ENCODE measurements at regions of chr3 and their contacts with region 1.

Region 1: DNA sequence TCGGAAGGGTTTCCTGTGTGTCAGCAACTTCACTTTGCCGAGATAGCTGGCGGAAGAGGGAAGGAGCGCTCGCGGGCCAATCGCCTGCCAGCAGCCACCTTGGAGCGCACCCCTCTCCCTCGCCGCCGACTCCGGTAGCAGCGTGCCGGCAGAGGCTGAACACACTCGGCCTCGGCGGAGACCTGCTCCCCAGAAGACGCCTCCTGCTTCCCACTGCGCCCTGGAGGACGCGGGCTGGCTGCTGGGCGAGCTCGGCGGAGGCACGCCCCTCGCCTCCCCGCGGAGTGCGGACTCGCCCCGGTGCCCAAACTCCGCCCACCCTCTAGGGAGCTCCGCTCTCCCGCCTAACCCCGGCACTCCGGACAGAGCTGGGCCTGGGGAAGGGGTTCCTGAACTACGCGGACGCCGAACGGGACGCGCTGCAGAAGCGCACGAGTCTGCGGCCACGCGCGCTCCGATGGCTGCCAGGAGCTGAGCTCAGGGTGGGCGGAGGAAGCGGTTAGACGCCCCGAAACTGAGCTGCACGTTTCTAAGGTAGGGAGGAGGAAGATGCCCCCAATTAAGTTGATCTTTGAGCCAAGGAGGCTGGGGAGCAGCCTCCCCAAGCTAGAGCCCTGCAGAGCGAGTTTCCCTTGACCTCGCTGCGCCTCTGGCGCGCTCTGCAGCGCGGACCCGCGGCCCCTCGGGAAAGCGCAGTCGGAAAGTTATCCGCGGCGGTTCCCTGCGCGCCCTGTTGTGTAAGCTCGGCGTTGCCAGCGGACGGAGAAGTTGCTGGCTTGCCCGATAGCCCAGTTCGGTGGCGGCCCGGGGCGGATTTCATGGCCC is at the start of gene P2RY1:
- DNase-seq: peak; percentile 68 to 86 (median 72)
- ATAC-seq: peak; percentile 81 to 94 (median 90)
- H3K4me3 ChIP-seq: peak within 1 kb of the TSS; percentile 53 to 88 (median 80)
- H3K27ac ChIP-seq: peak within 1 kb of the TSS; percentile 14 to 88 (median 74)
- H3K4me1 ChIP-seq: peaks cover 0 to 40% (median 6%) of the 10 kb centered on the region in 12 donors
- H3K27me3 ChIP-seq: peaks cover 0 to 5% (median 0%) of the 10 kb centered on the region in 9 donors
- CTCF ChIP-seq: peak in 9 of 12 donors; percentile 13 to 54 (median 29)
- POLR2A ChIP-seq: peak in 1 of 2 donors; percentile 52
- total RNA-seq, gene P2RY1: 4.1 to 8.4 (median 6.3) TPM

Region 2: DNA sequence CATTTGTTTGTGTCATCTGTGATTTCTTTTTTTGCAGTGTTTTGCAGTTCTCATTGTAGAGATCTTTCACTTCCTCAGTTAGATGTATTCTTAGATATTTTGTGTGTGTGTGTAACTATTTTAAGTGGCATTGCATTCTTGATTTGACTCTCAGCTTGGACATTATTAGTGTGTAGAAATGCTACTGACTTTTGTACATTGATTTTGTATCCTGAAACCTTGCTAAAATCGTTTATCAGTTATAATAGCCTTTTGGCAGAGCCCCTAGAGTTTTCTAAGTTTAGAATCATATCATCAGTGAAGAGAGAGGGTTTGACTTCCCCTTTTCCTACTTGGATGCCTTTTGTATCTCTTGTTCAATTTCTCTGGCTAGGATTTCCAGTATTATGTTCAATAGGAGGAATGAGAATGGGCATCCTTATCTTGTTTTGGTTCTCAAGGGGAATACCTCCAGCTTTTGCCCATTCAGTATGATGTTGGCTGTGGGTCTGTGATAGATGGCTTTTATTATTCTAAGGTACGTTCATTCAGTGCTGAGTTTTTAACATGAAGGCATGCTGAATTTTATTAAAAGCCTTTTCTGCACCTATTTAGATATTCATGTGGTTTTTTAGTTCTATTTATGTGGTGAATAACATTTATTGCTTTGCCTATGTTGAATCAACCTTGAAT is 354.6 kb before region 1 on chr3:
- intact Hi-C with region 1: loop called in 1 of 10 experiments (anchors 10 kb)
- DNase-seq: no peak
- ATAC-seq: no peak
- H3K4me3 ChIP-seq: no peak overlapping the region
- H3K27ac ChIP-seq: no peak overlapping the region
- H3K4me1 ChIP-seq: peaks cover 0 to 8% (median 0%) of the 10 kb centered on the region in 12 donors
- H3K27me3 ChIP-seq: no peaks in the 10 kb centered on the region
- CTCF ChIP-seq: no peak
- POLR2A ChIP-seq: no peak

Region 3: GRCh38 chr3:152574461-152575079 is 260.4 kb before region 1 on chr3:
- intact Hi-C with region 1: loop called in 1 of 10 experiments (anchors 5 kb)
- DNase-seq: peak; percentile 49 to 78 (median 56)
- ATAC-seq: peak; percentile 78 to 90 (median 86)
- H3K4me3 ChIP-seq: no peak overlapping the region
- H3K27ac ChIP-seq: peak overlapping the region in 1 of 12 donors; percentile 16
- H3K4me1 ChIP-seq: peaks cover 0 to 11% (median 1%) of the 10 kb centered on the region in 12 donors
- H3K27me3 ChIP-seq: no peaks in the 10 kb centered on the region
- CTCF ChIP-seq: peak; percentile 36 to 71 (median 65)
- POLR2A ChIP-seq: no peak

Region 4: GRCh38 chr3:152742368-152743347 is 92.3 kb before region 1 on chr3:
- intact Hi-C with region 1: no loop called
- DNase-seq: no peak
- ATAC-seq: no peak
- H3K4me3 ChIP-seq: no peak overlapping the region
- H3K27ac ChIP-seq: no peak overlapping the region
- H3K4me1 ChIP-seq: peaks cover 0 to 16% (median 6%) of the 10 kb centered on the region in 12 donors
- H3K27me3 ChIP-seq: no peaks in the 10 kb centered on the region
- CTCF ChIP-seq: no peak
- POLR2A ChIP-seq: no peak

Region 5: DNA sequence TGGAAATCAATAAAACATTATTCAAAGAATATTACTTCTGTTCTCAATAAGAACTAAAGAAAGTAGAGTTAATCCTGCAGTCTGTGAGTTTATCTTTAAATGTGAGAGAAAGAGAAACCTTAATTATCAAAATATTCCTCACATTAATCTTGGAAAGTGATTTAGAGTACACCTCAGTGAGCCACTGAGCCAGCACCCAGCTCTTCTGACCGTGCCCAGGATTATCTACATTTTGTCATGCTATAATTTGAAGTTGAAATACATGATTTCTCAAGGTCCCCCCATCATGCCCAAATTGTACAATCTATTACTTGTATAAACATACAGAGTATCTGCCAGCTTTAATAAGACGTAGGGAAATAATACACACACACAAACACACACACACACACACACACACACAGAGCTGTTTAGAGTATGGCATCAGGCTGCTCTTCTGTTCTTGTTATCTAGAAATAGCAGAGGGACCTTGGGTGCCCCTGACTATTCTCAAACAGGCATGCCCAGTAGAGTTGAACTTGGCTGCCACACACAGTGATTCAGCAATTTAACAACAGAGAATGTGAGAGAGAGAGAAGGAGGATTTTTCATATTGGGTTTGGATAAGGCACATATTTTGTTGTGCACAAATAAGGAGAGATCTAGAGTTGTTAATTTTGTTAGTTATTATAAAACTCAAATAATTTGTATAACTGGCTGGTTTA is 74.3 kb after region 1 on chr3:
- intact Hi-C with region 1: loop called in 1 of 10 experiments (anchors 5 kb)
- DNase-seq: peak in 4 of 5 donors; percentile 37 to 74 (median 51)
- ATAC-seq: peak; percentile 96 to 99 (median 98)
- H3K4me3 ChIP-seq: no peak overlapping the region
- H3K27ac ChIP-seq: peak overlapping the region in 7 of 12 donors; percentile 5 to 55 (median 38)
- H3K4me1 ChIP-seq: peaks cover 0 to 11% (median 1%) of the 10 kb centered on the region in 12 donors
- H3K27me3 ChIP-seq: no peaks in the 10 kb centered on the region
- CTCF ChIP-seq: no peak
- POLR2A ChIP-seq: no peak

Region 6: GRCh38 chr3:152961323-152961722 is 126.3 kb after region 1 on chr3:
- intact Hi-C with region 1: loop called in 1 of 10 experiments (anchors 5 kb)
- DNase-seq: no peak
- ATAC-seq: no peak
- H3K4me3 ChIP-seq: no peak overlapping the region
- H3K27ac ChIP-seq: no peak overlapping the region
- H3K4me1 ChIP-seq: peaks cover 0 to 9% (median 0%) of the 10 kb centered on the region in 12 donors
- H3K27me3 ChIP-seq: no peaks in the 10 kb centered on the region
- CTCF ChIP-seq: peak in 10 of 12 donors; percentile 23 to 48 (median 34)
- POLR2A ChIP-seq: no peak

Measured in heart left ventricle (tissue), 16 donors.